ENCODE measurements at regions of chr11 and their contacts with region 1.

Region 1: GRCh38 chr11:6603287-6604080 is at the starts of genes ILK and RRP8:
- DNase-seq: peak; percentile 89 to 92 (median 90)
- H3K4me3 ChIP-seq: peak within 1 kb of the TSS; percentile 61 to 97 (median 86)
- H3K27ac ChIP-seq: peak within 1 kb of the TSS; percentile 82 to 87
- H3K4me1 ChIP-seq: peaks cover 34 to 67% (median 56%) of the 10 kb centered on the region in 4 experiments
- H3K27me3 ChIP-seq: no peaks in the 10 kb centered on the region

Region 2: DNA sequence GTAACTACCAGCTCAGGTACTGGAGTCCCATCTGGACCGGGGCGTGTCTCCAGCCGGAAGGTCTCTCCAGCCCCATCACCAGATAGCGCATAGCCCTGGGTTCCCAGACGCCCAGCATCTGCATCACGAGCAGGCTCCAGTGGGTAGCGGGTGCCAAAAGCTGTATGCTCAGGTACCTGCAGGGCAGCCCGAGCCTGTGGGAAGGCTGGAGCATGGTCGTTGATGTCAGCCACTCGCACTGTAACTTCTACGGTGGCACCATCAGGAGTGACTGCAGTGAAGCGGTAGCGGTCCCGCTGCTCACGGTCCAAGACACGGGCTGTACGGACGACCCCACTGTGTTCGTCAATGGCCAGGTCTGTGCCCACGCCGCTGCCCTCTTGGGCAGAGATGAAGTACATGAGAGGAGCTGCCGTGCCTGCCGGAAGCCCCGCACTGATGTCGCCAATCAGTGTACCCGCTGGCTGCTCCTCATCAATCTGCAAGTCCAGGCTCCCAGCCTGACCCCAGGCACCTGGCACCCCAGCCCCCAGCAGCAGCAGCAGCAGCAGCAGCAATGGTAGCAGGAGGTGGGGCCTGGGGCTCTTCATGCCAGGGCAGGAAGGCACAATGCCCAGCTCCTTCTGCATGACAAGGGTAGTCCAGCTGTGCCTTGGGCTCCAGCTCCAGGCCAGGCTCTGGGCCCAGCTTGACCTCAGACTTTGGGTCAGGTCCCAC is 37.7 kb after region 1 on chr11:
- CTCF ChIA-PET with region 1: no interaction called
- POLR2A ChIA-PET with region 1: no interaction called
- DNase-seq: no peak
- H3K4me3 ChIP-seq: no peak overlapping the region
- H3K27ac ChIP-seq: no peak overlapping the region
- H3K4me1 ChIP-seq: peaks cover 2 to 23% (median 8%) of the 10 kb centered on the region in 4 experiments
- H3K27me3 ChIP-seq: no peaks in the 10 kb centered on the region

Region 3: DNA sequence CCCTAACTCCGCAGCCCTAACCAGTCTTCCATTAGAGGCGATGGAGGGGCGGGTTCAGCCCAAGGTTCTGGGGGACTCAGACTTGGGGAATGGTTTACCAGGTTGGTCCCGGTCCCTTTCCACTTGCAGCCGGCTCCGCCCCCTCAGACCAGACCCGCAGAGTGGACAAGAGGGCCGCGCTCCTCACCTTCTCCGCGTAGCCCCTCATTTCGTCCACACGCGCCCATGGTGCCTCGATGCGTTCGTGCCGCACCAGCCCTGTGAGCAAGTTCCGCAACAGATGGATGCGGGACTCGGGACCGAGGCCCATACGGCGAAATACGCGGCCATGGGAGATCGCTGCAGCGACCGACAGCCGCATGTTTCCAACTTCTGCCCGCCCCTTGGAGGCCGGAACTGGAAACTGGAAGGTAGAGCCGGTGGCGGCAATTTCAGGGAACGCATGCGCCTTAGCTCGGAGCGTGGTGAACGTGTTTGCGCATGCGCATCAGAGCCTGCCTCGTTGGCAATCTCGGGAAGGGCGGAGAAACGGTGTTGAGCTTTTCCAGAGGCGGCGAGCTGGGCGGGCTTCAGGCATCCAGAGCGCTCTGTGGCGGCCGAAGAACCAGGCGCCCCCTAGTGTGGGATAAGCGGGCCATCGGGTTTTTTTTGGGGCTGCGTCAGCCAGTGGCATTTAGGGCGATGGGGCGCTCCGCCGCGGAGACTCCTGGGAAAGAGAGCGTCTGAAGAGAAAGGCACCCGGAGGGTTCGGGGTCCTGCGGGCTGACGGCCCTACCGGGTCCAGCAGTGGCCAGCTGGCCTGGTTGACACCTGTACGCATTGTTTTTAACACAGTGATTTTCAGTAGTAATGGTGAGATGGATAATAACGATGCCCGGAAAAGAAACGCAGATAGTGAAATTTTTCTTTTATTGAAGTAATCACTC is 79.7 kb after region 1 on chr11 and contains the start of gene MRPL17:
- CTCF ChIA-PET with region 1: interaction called, 12 read pairs
- POLR2A ChIA-PET with region 1: no interaction called
- DNase-seq: peak; percentile 99 to 100 (median 99)
- H3K4me3 ChIP-seq: peak within 1 kb of the TSS; percentile 51 to 99 (median 96)
- H3K27ac ChIP-seq: peak within 1 kb of the TSS; percentile 77 to 90
- H3K4me1 ChIP-seq: peaks cover 7 to 23% (median 18%) of the 10 kb centered on the region in 4 experiments
- H3K27me3 ChIP-seq: no peaks in the 10 kb centered on the region